CD4-positive, alpha-beta T cell (primary cell): ENCODE measurements at regions of chr12 and their contacts with region 1.

Region 1: GRCh38 chr12:23927907-23928306 is 21.6 kb downstream of the SOX5 start:
- DNase-seq: no peak
- ATAC-seq: no peak
- H3K4me3 ChIP-seq: no peak overlapping the region
- H3K4me3 Mint-ChIP-seq: no peak overlapping the region
- H3K27ac ChIP-seq: no peak overlapping the region
- H3K27ac Mint-ChIP-seq: no peak overlapping the region
- H3K4me1 ChIP-seq: no peaks in the 10 kb centered on the region
- H3K4me1 Mint-ChIP-seq: no peaks in the 10 kb centered on the region
- H3K27me3 ChIP-seq: no peaks in the 10 kb centered on the region
- H3K27me3 Mint-ChIP-seq: no peaks in the 10 kb centered on the region
- CTCF ChIP-seq: no peak

Region 2: DNA sequence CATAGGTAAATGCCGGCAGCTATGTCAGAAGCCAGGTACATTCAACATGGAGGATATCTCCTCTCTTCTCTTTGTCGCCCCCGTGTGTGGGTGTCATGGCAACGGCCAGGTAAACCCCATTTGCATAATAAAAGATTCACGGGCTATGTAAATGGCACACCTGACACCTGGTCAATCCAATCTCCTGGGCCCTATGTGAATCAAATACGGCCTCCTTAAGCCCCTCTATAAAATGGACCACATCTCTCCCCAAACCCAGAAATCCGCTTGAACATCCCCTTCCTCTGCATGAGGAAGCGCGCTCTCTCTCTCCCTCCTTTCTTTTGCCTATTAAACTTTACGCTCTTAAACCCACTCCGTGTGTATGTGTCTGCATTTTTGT is 342.1 kb before region 1 on chr12:
- CTCF ChIA-PET with region 1: no interaction called
- POLR2A ChIA-PET with region 1: no interaction called
- intact Hi-C with region 1: no loop called
- DNase-seq: no peak
- ATAC-seq: no peak
- H3K4me3 ChIP-seq: no peak overlapping the region
- H3K4me3 Mint-ChIP-seq: no peak overlapping the region
- H3K27ac ChIP-seq: no peak overlapping the region
- H3K27ac Mint-ChIP-seq: no peak overlapping the region
- H3K4me1 ChIP-seq: no peaks in the 10 kb centered on the region
- H3K4me1 Mint-ChIP-seq: no peaks in the 10 kb centered on the region
- H3K27me3 ChIP-seq: no peaks in the 10 kb centered on the region
- H3K27me3 Mint-ChIP-seq: no peaks in the 10 kb centered on the region
- CTCF ChIP-seq: no peak

Region 3: DNA sequence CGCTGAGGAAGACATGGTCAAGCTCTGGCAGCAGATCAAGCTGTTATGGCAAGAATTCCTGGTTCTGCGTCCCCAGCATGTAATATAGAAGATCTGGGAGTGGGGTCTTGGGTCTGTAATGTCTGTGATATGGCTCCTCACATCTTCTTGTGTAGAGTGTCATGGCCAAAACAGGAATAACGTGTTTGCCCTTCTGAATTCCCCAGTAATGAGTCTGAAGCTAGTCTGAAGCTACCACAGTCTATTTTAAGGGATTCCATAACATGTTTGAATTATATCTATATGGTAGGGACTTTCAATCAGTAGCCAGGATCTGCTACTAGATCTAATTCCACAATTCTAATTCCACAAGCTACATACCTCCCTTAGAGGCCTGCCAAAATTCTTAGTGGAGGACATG is 52.9 kb after region 1 on chr12:
- CTCF ChIA-PET with region 1: no interaction called
- POLR2A ChIA-PET with region 1: no interaction called
- intact Hi-C with region 1: loop called in 1 of 2 experiments (anchors 5 kb)
- DNase-seq: no peak
- ATAC-seq: no peak
- H3K4me3 ChIP-seq: no peak overlapping the region
- H3K4me3 Mint-ChIP-seq: no peak overlapping the region
- H3K27ac ChIP-seq: no peak overlapping the region
- H3K27ac Mint-ChIP-seq: no peak overlapping the region
- H3K4me1 ChIP-seq: no peaks in the 10 kb centered on the region
- H3K4me1 Mint-ChIP-seq: no peaks in the 10 kb centered on the region
- H3K27me3 ChIP-seq: no peaks in the 10 kb centered on the region
- H3K27me3 Mint-ChIP-seq: no peaks in the 10 kb centered on the region
- CTCF ChIP-seq: no peak

Region 4: DNA sequence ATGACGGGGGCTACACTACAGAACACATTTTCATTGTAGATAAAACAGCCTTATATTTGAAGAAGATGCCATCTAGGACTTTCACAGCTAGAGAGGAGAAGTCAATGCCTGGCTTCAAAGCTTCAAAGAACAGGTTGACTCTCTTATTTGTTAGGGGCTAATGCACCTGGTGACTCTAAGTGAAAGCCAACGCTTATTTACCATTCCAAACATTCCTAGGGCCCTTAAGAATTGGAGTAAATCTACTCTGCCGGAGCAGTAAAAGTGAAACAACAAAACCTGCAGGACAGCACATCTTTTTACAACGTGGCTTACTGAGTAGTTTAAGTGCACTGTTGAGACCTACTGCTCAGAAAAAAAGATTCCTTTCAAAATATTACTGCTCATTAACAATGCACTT is 508.8 kb after region 1 on chr12:
- CTCF ChIA-PET with region 1: no interaction called
- POLR2A ChIA-PET with region 1: no interaction called
- intact Hi-C with region 1: no loop called
- DNase-seq: no peak
- ATAC-seq: no peak
- H3K4me3 ChIP-seq: no peak overlapping the region
- H3K4me3 Mint-ChIP-seq: no peak overlapping the region
- H3K27ac ChIP-seq: no peak overlapping the region
- H3K27ac Mint-ChIP-seq: no peak overlapping the region
- H3K4me1 ChIP-seq: no peaks in the 10 kb centered on the region
- H3K4me1 Mint-ChIP-seq: no peaks in the 10 kb centered on the region
- H3K27me3 ChIP-seq: no peaks in the 10 kb centered on the region
- H3K27me3 Mint-ChIP-seq: no peaks in the 10 kb centered on the region
- CTCF ChIP-seq: no peak